GM12878 (cell line): ENCODE measurements at regions of chr11 and their contacts with region 1.

Region 1: DNA sequence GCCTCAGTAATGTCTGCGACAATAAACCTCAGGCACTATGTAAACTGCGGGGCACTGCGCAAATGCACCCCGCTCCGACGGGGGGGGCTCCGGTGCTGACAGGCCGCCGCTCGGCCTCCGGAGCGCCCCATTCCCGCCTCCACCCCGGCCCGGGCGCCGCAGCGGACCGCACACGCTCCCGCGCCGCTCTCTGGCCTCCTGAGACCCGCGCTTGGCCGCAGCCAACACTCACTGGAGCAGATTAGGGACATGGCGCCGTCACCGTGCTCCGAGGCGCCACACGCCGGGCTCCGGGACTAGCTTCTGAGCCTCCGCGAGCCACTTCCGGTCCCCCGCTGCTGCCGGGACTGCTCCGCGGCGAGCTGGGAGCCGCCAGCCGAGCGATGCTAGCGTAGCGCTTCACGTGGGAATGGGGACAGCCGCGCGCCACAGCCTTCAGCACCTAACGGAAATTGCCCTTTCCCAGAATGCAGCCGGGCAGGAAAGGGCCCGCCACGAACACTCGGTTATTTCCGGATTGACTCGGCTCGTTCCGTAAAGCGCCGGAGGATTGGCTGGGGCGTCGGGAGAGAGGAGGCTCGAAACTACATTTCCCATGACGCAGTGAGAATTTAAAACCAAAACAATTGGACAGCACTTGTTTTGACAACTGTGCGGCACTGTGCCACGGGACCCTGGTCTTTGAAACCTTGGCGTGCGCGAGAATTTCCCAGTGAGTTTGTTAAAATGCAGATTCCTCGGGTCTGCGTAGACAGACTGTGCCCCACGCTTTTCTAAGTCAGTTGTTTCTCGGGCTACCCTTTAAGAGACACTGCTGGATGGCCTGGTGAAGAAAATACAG is at the start of gene PRPF19:
- DNase-seq: peak; percentile 93
- ATAC-seq: peak; percentile 87
- H3K4me3 ChIP-seq: peak within 1 kb of the TSS; percentile 86
- H3K27ac ChIP-seq: peak within 1 kb of the TSS; percentile 89
- H3K4me1 ChIP-seq: peaks cover 36% of the 10 kb centered on the region
- H3K27me3 ChIP-seq: no peaks in the 10 kb centered on the region
- CTCF ChIP-seq: no peak
- EP300 ChIP-seq: 0 out of 4 replicates have a peak, but pooled peaks of 1 of the 2 experiments have one; percentile 34
- POLR2A ChIP-seq: peak; percentile 99
- RAD21 ChIP-seq: no peak
- polyA plus RNA-seq, gene PRPF19: 8.7 to 27.7 TPM

Region 2: DNA sequence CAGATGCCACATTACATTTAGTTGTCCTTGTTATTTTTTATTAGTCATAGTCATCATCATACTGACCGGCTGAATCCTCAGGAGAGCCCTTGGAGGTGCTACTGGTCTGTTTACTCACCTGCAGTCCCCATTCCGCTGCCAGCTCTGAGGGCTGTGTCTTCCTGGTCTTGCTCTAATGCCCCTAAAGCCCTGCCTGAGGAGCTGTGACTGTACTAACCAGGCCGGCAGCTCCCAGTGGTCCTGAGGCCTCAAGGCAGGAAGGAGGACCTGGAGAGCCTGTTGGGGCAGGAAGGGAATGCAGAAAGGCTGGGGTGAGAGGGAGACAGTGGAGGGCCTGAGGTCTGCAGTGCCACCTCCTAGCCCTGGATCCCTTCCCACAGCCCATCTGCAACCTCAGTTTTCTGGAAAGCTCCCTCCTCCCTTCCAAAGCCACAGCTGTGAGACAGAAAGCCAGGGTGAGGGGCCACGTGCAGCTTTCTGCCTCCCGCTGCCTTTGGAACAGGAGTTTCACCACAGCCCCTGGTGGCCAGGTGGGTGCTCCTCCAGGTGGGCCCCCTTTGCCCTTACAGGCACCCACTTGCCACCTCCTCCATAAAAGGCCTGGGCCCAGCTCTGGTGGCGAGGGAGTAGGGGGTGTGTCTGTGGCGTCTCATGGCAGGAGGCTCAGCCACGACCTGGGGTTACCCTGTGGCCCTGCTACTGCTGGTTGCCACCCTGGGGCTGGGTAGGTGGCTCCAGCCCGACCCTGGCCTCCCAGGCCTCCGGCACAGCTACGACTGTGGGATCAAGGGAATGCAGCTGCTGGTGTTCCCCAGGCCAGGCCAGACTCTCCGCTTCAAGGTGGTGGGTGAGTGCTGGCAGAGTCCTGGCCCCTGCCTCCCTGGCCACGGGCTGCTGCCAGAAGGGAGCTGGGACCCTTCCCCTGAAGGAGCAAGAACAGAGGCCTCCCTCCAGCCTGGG is 39.2 kb before region 1 on chr11 and contains the start of gene ZP1:
- CTCF ChIA-PET with region 1: no interaction called
- POLR2A ChIA-PET with region 1: no interaction called
- RAD21 ChIA-PET with region 1: no interaction called
- SMC1A ChIA-PET with region 1: no interaction called
- in situ Hi-C with region 1: no loop called
- intact Hi-C with region 1: no loop called
- DNase-seq: no peak
- ATAC-seq: no peak
- H3K4me3 ChIP-seq: no peak within 1 kb of the TSS
- H3K27ac ChIP-seq: no peak within 1 kb of the TSS
- H3K4me1 ChIP-seq: no peaks in the 10 kb centered on the region
- H3K27me3 ChIP-seq: no peaks in the 10 kb centered on the region
- CTCF ChIP-seq: no peak
- EP300 ChIP-seq: no peak
- POLR2A ChIP-seq: no peak
- RAD21 ChIP-seq: no peak
- polyA plus RNA-seq, gene ZP1: not detected

Region 3: GRCh38 chr11:60887556-60887955 is 18.8 kb before region 1 on chr11:
- CTCF ChIA-PET with region 1: interaction called, 51 read pairs
- POLR2A ChIA-PET with region 1: no interaction called
- RAD21 ChIA-PET with region 1: no interaction called
- SMC1A ChIA-PET with region 1: no interaction called
- in situ Hi-C with region 1: no loop called
- intact Hi-C with region 1: no loop called
- DNase-seq: no peak
- ATAC-seq: peak; percentile 93
- H3K4me3 ChIP-seq: no peak overlapping the region
- H3K27ac ChIP-seq: no peak overlapping the region
- H3K4me1 ChIP-seq: no peaks in the 10 kb centered on the region
- H3K27me3 ChIP-seq: no peaks in the 10 kb centered on the region
- CTCF ChIP-seq: peak; percentile 47 to 61 (median 58); a peak in 5 of 6 replicates
- EP300 ChIP-seq: no peak
- POLR2A ChIP-seq: no peak
- RAD21 ChIP-seq: peak; percentile 73

Region 4: DNA sequence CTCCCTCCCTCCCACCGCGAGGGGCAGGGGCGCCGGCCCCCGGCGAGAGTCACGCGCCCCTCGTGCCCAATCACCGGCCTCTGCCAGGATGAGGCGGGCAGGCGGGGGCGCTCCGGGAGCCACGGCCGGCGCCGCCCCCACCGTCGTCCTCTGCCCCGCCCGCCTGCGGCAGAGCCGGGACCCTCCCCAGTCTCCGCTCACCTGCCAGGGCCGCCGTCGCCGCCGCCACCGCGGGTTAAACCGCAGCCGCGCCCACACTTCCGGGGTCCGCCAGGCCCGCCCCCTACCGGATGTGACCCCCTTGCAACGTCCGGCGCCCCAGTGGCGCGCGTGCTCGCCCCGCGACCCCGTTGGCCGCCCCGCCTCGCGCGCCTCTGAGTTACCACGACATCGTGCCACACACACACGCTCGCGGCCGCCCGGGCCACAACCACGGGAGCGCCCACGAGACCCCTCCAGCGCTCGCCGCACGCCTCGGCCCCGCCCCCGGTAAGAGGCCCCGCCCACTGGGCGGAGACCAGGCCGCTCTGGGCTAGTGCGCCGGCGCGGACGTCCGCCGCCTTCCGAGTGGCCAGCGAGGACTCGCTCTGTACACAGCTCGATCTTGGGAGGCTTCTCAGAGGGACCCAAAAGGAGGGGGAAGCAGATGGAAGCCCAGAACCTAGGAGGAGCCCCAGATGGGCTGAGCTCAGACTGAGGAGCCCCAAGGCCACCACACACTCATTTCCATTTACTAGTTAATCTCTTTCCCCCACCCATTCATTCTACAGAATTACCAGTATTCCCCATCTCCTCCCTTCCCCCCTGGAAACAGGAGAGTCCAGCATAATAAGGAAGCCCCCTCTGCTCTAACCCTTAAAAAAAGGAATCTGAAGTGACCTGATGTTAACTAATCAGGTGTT is 255.1 kb after region 1 on chr11 and contains the start of gene VPS37C:
- CTCF ChIA-PET with region 1: no interaction called
- POLR2A ChIA-PET with region 1: interaction called, 5 read pairs
- RAD21 ChIA-PET with region 1: no interaction called
- SMC1A ChIA-PET with region 1: no interaction called
- in situ Hi-C with region 1: no loop called
- intact Hi-C with region 1: loop called (anchors 2 kb)
- DNase-seq: peak; percentile 71
- ATAC-seq: peak; percentile 80
- H3K4me3 ChIP-seq: peak within 1 kb of the TSS; percentile 86
- H3K27ac ChIP-seq: peak within 1 kb of the TSS; percentile 96
- H3K4me1 ChIP-seq: peaks cover 39% of the 10 kb centered on the region
- H3K27me3 ChIP-seq: no peaks in the 10 kb centered on the region
- CTCF ChIP-seq: no peak
- EP300 ChIP-seq: peak in 1 of 2 experiments; percentile 27; a peak in 1 of 4 replicates
- POLR2A ChIP-seq: peak; percentile 86
- RAD21 ChIP-seq: no peak
- polyA plus RNA-seq, gene VPS37C: 0.39 to 0.88 TPM